ENCODE measurements at regions of chr19 and their contacts with region 1.

Region 1: DNA sequence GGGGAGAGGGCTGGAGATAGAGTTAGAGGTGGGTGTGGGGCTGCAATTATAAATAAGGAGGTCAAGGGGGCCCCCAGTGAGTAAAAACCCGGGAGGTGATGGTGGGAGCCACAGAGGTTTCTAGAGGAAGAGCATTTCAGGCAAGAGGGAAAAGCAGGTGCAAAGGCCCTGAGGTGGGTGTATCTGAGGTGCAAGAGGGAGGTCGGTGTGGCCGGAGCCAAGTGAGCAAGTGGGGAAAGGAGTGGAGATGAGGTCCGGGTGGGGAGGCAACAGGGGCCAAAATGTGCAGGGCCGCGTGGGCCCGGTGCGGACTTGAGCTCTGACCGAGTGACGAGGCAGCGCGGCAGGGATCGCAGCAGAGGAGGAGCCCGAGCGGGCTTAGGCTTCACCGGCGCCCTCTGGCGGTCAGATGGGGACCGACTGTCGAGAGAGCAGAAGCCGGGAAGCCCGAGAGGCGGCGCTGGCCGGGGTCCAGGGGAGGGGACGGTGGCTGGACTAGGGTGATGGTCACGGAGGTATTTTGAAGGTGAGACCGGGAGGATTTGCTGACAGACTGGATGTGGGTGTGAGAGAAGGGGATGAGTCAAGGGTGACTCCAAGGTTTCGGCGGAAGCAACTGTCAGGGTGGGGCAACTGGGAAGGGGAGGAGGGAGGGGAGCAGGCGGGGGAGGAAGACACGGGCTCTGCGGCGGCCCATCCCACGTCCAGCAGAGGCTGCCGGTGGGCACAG is 17.7 kb upstream of the SPACA4 start:
- DNase-seq: peak; percentile 96
- H3K4me3 Mint-ChIP-seq: peak overlapping the region; percentile 59
- H3K27ac Mint-ChIP-seq: peak overlapping the region; percentile 83
- H3K4me1 Mint-ChIP-seq: peaks cover 13% of the 10 kb centered on the region
- H3K27me3 Mint-ChIP-seq: no peaks in the 10 kb centered on the region
- CTCF ChIP-seq: peak; percentile 94

Region 2: GRCh38 chr19:48255376-48256303 is 333.2 kb before region 1 on chr19 and contains the start of gene CARD8:
- CTCF ChIA-PET with region 1: interaction called, 3 read pairs
- POLR2A ChIA-PET with region 1: no interaction called
- intact Hi-C with region 1: loop called (anchors 10 kb)
- DNase-seq: peak; percentile 90
- H3K4me3 Mint-ChIP-seq: peak within 1 kb of the TSS; percentile 97
- H3K27ac Mint-ChIP-seq: peak within 1 kb of the TSS; percentile 99
- H3K4me1 Mint-ChIP-seq: peaks cover 9% of the 10 kb centered on the region
- H3K27me3 Mint-ChIP-seq: no peaks in the 10 kb centered on the region
- CTCF ChIP-seq: no peak
- total RNA-seq, gene CARD8: 16.0 and 24.0 TPM in 2 replicates

Region 3: GRCh38 chr19:48321622-48322591 is 266.9 kb before region 1 on chr19:
- CTCF ChIA-PET with region 1: interaction called, 3 read pairs
- POLR2A ChIA-PET with region 1: no interaction called
- intact Hi-C with region 1: loop called (anchors 2 kb)
- DNase-seq: peak; percentile 99
- H3K4me3 Mint-ChIP-seq: peak overlapping the region; percentile 95
- H3K27ac Mint-ChIP-seq: peak overlapping the region; percentile 97
- H3K4me1 Mint-ChIP-seq: peaks cover 43% of the 10 kb centered on the region
- H3K27me3 Mint-ChIP-seq: no peaks in the 10 kb centered on the region
- CTCF ChIP-seq: no peak

Region 4: DNA sequence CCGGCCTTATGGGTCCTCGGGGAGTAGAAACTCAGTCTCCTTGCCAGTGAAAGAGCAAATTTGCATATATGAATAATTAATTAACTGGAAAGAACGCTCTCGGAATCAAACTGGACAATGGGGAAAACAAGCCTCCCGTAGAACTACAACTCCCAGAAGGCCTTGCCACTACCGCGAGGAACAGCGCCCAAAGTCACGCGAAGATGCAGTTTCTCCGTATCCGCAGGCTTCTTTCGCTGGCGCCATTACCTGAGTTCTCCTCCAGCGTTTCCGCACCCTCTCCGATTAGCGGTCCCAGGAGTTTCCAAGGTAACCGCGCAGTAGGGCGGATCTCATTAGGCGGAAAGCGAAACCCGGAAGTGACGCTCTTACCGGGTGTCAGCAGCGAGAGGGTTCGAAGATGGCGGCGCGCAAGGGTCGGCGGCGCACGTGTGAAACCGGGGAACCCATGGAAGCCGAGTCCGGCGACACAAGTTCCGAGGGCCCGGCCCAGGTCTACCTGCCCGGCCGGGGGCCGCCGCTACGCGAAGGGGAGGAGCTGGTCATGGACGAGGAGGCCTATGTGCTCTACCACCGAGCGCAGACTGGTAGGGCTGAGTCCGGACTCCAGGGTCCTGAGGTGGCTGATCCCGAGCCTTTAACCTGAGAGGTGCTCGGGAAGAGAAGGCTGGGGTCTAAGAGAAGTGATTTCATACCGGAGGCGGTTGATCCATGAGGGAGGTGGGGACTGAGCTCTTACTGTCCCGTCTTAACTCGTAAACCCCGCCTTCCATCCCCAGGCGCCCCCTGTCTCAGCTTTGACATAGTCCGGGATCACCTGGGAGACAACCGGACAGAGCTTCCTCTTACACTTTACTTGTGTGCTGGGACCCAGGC is 143.0 kb before region 1 on chr19 and contains the start of gene GRWD1:
- CTCF ChIA-PET with region 1: interaction called, 4 read pairs
- POLR2A ChIA-PET with region 1: interaction called, 9 read pairs
- intact Hi-C with region 1: loop called (anchors 1 kb)
- DNase-seq: peak; percentile 98
- H3K4me3 Mint-ChIP-seq: peak within 1 kb of the TSS; percentile 93
- H3K27ac Mint-ChIP-seq: peak within 1 kb of the TSS; percentile 94
- H3K4me1 Mint-ChIP-seq: peaks cover 23% of the 10 kb centered on the region
- H3K27me3 Mint-ChIP-seq: no peaks in the 10 kb centered on the region
- CTCF ChIP-seq: peak; percentile 6
- total RNA-seq, gene GRWD1: 45.1 and 55.8 TPM in 2 replicates

Region 5: DNA sequence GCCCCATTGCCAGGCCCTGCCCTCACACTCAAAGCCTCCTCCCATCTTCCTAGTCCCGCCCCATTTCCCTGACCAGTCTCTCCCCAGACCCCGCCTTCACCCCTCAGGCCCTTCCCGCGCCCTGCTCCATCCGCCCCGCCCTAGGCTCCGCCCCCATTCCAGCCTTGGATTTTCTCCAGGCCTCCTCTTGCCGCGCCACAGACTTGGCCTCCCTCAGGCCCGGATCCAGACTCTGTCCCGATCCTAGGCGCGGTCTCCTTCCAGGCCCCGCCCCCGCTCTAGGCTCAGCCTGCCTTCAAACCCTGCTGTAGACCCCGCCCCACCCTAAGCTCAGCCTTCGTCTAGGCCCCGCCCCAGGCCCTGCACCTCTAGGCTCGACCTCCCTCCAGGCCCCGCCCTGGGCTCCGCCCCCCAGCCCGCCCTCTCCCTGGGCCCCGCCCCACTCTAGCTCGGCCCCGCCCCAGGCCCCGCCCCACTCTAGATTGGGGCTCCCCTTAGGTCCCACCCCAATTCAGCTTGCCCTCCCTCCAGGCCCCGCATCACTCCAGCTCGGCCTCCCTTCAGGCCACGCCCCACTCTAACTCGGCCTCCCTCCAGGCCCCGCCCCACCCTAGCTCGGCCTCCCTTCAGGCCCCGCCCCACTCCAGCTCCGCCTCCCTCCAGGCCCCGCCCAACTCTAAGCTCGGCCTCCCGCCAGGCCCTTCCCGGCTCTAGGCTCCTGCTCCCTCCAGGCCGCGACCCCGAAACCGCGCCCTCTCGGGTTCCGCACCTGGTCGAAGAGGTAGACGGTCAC is 95.7 kb before region 1 on chr19:
- CTCF ChIA-PET with region 1: interaction called, 41 read pairs
- POLR2A ChIA-PET with region 1: interaction called, 17 read pairs
- intact Hi-C with region 1: loop called (anchors 1 kb)
- DNase-seq: peak; percentile 99
- H3K4me3 Mint-ChIP-seq: peak overlapping the region; percentile 81
- H3K27ac Mint-ChIP-seq: peak overlapping the region; percentile 5
- H3K4me1 Mint-ChIP-seq: peaks cover 20% of the 10 kb centered on the region
- H3K27me3 Mint-ChIP-seq: no peaks in the 10 kb centered on the region
- CTCF ChIP-seq: no peak

Region 6: GRCh38 chr19:48513289-48514122 is 75.3 kb before region 1 on chr19:
- CTCF ChIA-PET with region 1: interaction called, 99 read pairs
- POLR2A ChIA-PET with region 1: interaction called, 3 read pairs
- intact Hi-C with region 1: no loop called
- DNase-seq: peak; percentile 78
- H3K4me3 Mint-ChIP-seq: no peak overlapping the region
- H3K27ac Mint-ChIP-seq: no peak overlapping the region
- H3K4me1 Mint-ChIP-seq: no peaks in the 10 kb centered on the region
- H3K27me3 Mint-ChIP-seq: no peaks in the 10 kb centered on the region
- CTCF ChIP-seq: no peak

Region 7: GRCh38 chr19:48524728-48525127 is 64.1 kb before region 1 on chr19:
- CTCF ChIA-PET with region 1: no interaction called
- POLR2A ChIA-PET with region 1: no interaction called
- intact Hi-C with region 1: no loop called
- DNase-seq: no peak
- H3K4me3 Mint-ChIP-seq: no peak overlapping the region
- H3K27ac Mint-ChIP-seq: no peak overlapping the region
- H3K4me1 Mint-ChIP-seq: no peaks in the 10 kb centered on the region
- H3K27me3 Mint-ChIP-seq: no peaks in the 10 kb centered on the region
- CTCF ChIP-seq: no peak

Region 8: DNA sequence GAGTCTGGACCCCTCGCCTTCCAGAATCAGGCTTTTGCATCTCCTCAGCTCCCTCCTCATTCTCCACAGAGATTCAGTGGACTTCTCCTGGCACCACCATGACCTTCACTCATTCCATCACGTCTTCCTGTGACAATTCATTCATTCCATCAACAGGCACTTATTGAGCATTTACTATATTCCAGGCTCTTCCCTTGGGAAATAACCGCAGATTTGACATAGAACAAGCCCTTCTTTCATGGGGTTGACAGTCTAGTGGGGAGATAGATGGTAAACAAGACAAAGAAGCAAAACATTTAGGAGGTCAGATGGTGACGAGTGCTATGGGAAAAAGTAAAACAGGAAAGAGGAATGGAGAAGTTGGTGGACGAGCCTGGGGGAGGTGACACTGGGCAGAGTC is 39.4 kb before region 1 on chr19:
- CTCF ChIA-PET with region 1: no interaction called
- POLR2A ChIA-PET with region 1: no interaction called
- intact Hi-C with region 1: no loop called
- DNase-seq: no peak
- H3K4me3 Mint-ChIP-seq: no peak overlapping the region
- H3K27ac Mint-ChIP-seq: no peak overlapping the region
- H3K4me1 Mint-ChIP-seq: no peaks in the 10 kb centered on the region
- H3K27me3 Mint-ChIP-seq: peaks cover 10% of the 10 kb centered on the region
- CTCF ChIP-seq: no peak

Region 9: GRCh38 chr19:48705431-48705830 is 116.6 kb after region 1 on chr19:
- CTCF ChIA-PET with region 1: no interaction called
- POLR2A ChIA-PET with region 1: no interaction called
- intact Hi-C with region 1: no loop called
- DNase-seq: no peak
- H3K4me3 Mint-ChIP-seq: no peak overlapping the region
- H3K27ac Mint-ChIP-seq: no peak overlapping the region
- H3K4me1 Mint-ChIP-seq: no peaks in the 10 kb centered on the region
- H3K27me3 Mint-ChIP-seq: no peaks in the 10 kb centered on the region
- CTCF ChIP-seq: no peak

Measured in MCF 10A (cell line).